ENCODE measurements at regions of chr11 and their contacts with region 1.

Region 1: DNA sequence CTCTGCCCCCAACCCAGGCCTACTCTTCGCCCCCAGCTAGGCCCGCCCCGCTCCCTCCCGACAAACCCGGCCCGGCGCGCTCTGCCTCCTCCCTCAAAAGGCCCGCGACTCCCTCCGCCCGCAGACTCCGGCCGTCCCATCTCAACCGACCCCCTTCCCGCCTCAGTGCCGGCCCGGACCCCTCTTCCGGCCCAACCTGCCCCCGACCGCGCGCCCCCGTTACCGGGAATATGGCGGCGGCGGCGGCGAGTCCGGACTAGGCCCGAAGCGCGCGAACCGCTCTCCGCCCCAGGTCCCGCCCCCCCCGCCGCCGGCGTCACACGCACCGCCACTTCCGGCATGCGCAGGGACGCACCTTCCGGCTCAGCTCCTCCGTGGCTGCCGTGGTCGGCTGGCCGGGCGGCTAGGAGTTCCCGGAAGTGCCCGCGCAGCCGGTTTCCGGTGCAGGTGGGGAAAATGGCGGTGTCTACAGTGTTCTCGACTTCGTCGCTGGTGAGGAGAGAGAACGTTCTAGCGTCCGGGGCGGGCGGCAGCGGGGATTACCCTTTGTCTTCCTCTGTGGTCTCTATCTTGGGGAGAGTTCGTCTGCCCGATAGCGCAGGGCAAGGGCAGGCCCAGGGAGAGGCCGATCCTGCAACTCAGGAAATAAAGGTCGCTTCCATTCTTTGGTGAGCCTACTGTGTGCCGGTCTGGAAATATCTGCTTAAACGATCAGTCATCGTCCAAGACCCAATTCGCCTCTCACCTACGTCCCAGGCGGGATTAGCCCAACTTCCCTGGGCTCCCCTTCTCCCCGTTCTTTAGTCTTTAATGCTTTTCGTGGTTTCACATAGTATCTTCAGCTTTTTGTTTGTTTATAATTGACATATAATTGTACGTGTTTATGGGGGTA is at the starts of genes CPSF7 and SDHAF2:
- DNase-seq: peak; percentile 97
- H3K4me3 ChIP-seq: peak within 1 kb of the TSS; percentile 67
- H3K4me3 Mint-ChIP-seq: peak within 1 kb of the TSS; percentile 92
- H3K27ac Mint-ChIP-seq: peak within 1 kb of the TSS; percentile 98
- H3K4me1 ChIP-seq: peaks cover 8% of the 10 kb centered on the region; the same call in 1 of the 2 replicates
- H3K4me1 Mint-ChIP-seq: peaks cover 6% of the 10 kb centered on the region
- H3K27me3 ChIP-seq: no peaks in the 10 kb centered on the region
- H3K27me3 Mint-ChIP-seq: no peaks in the 10 kb centered on the region
- CTCF ChIP-seq: no peak
- total RNA-seq, gene CPSF7: 123 and 128 TPM in 2 replicates
- total RNA-seq, gene SDHAF2: 49.2 and 52.1 TPM in 2 replicates

Region 2: DNA sequence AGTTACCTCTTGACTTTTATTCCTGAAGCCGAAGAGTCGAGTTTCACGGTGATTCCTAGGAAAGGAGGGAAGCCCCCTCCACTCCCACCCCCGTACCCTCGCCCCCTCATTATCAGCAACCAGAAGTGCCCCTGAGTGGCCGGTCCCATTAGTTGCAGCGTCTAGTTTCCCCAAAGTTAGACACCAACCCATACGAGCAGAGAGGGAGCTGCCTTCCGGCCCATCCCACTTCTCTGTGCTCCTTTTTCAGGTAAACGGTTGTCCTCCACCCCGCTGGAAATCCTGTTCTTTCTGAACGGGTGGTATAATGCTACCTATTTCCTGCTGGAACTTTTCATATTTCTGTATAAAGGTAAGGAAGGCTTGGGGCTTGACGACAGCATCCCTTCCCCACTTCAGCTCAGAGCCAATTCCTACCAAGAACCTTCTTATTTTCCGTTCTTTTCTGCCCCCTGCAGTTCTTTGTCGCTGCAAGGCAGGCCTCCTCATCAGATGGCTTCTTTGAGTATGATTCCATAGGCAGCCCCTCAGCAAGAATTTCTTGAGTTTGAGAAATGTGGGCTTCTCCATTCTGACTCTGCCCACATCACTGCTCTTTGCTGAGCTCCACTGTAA is 36.8 kb before region 1 on chr11:
- CTCF ChIA-PET with region 1: interaction called, 3 read pairs
- POLR2A ChIA-PET with region 1: interaction called, 14 read pairs
- intact Hi-C with region 1: no loop called
- DNase-seq: peak; percentile 23 to 32
- H3K4me3 ChIP-seq: peak overlapping the region; percentile 94
- H3K4me3 Mint-ChIP-seq: peak overlapping the region; percentile 99
- H3K27ac Mint-ChIP-seq: peak overlapping the region; percentile 98
- H3K4me1 ChIP-seq: no peaks in the 10 kb centered on the region
- H3K4me1 Mint-ChIP-seq: no peaks in the 10 kb centered on the region
- H3K27me3 ChIP-seq: no peaks in the 10 kb centered on the region
- H3K27me3 Mint-ChIP-seq: no peaks in the 10 kb centered on the region
- CTCF ChIP-seq: peak in 1 of 2 experiments; percentile 32

Region 3: GRCh38 chr11:61406067-61406466 is 23.9 kb before region 1 on chr11:
- CTCF ChIA-PET with region 1: no interaction called
- POLR2A ChIA-PET with region 1: no interaction called
- intact Hi-C with region 1: no loop called
- DNase-seq: no peak
- H3K4me3 ChIP-seq: no peak overlapping the region
- H3K4me3 Mint-ChIP-seq: no peak overlapping the region
- H3K27ac Mint-ChIP-seq: no peak overlapping the region
- H3K4me1 ChIP-seq: no peaks in the 10 kb centered on the region
- H3K4me1 Mint-ChIP-seq: no peaks in the 10 kb centered on the region
- H3K27me3 ChIP-seq: no peaks in the 10 kb centered on the region
- H3K27me3 Mint-ChIP-seq: no peaks in the 10 kb centered on the region
- CTCF ChIP-seq: no peak

Region 4: DNA sequence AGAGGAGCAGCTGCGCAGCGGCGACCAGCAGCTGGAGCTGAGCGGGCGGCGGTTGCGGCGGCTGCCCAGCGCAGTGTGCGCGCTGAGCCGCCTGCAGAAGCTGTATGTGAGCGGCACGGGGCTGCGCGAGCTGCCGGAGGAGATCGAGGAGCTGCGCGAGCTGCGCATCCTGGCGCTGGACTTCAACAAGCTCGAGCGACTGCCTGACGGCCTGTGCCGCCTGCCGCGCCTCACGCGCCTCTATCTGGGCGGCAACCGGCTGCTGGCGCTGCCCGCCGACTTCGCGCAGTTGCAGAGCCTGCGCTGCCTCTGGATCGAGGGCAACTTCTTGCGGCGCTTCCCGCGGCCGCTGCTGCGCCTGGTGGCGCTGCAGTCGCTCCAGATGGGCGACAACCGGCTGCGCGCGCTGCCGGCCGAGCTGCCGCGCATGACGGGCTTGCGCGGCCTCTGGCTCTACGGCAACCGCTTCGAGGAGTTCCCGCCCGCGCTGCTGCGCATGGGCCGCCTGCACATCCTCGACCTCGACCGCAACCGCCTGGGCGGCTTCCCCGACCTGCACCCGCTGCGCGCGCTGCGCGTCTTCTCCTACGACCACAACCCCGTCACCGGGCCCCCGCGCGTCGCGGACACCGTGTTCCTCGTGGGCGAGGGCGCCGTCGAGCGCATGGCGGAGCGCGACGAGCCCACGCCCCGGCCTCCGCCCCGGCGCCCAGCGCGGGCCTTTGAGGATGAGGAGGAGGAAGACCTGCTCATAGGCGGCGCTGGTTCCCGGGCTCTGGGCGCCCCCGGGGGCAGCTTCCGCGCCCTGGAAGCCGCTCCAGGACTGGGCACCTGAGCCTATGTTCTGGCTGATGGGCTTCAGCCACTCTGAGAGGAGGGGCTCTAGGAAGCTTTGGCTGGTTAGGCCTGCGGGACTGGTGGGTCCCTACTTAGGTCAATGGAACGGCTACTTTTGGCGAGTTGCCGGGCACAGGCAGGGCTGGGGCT is 79.4 kb after region 1 on chr11:
- CTCF ChIA-PET with region 1: no interaction called
- POLR2A ChIA-PET with region 1: interaction called, 14 read pairs
- intact Hi-C with region 1: no loop called
- DNase-seq: peak; percentile 82 to 87
- H3K4me3 ChIP-seq: peak overlapping the region; percentile 52
- H3K4me3 Mint-ChIP-seq: peak overlapping the region; percentile 80
- H3K27ac Mint-ChIP-seq: no peak overlapping the region
- H3K4me1 ChIP-seq: peaks cover 37% of the 10 kb centered on the region
- H3K4me1 Mint-ChIP-seq: peaks cover 27% of the 10 kb centered on the region
- H3K27me3 ChIP-seq: no peaks in the 10 kb centered on the region
- H3K27me3 Mint-ChIP-seq: peaks cover 5% of the 10 kb centered on the region
- CTCF ChIP-seq: peak; percentile 59 to 71